Calu3 (cell line): ENCODE measurements at regions of chr7 and their contacts with region 1.

Region 1: DNA sequence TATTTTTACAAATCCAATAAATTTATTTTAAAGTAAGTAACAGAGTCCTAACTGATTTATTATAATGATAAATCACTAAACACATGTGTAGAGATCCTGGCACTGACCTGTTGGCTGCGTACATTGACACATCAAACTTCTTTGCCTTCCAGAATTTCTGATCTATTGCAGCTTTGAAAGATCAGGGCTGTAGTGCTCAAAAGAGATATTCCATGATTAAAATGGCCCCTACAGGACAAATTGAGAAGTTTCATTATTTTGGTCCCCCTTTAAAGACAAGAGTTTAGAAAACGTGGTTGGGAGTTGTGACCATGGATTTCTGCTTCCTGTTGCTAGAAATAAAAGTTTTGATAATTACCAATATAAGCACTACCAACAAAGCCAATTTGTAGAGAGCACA is 87.7 kb upstream of the PDK4 start:
- DNase-seq: no peak
- H3K4me3 Mint-ChIP-seq: no peak overlapping the region
- H3K27ac Mint-ChIP-seq: no peak overlapping the region
- H3K4me1 Mint-ChIP-seq: peaks cover 6% of the 10 kb centered on the region
- H3K27me3 Mint-ChIP-seq: no peaks in the 10 kb centered on the region
- CTCF ChIP-seq: no peak

Region 2: DNA sequence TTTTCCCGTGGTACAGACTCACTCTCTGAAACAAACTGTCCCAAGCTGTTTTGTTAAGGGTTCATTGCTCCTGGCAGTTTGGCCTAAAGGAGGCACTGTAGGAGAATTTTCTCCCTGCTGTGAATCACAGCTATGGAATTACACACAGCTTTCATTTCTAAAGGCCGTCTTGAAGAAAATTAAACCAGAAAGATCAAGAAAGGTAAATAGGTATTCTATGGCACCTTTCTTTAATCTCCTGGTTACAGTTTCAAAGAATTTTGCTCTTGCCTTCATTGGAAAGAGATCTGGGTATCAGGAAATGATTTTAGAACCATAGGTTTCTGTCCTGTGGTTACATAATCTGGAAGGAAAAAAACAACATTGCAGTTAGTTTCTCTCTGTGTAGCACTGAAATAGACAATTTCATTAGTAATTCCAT is 138.9 kb before region 1 on chr7:
- CTCF ChIA-PET with region 1: interaction called, 29 read pairs
- intact Hi-C with region 1: loop called (anchors 1 kb)
- DNase-seq: peak; percentile 43
- H3K4me3 Mint-ChIP-seq: peak overlapping the region; percentile 64
- H3K27ac Mint-ChIP-seq: peak overlapping the region; percentile 92
- H3K4me1 Mint-ChIP-seq: peaks cover 16% of the 10 kb centered on the region
- H3K27me3 Mint-ChIP-seq: no peaks in the 10 kb centered on the region
- CTCF ChIP-seq: peak; percentile 20

Region 3: DNA sequence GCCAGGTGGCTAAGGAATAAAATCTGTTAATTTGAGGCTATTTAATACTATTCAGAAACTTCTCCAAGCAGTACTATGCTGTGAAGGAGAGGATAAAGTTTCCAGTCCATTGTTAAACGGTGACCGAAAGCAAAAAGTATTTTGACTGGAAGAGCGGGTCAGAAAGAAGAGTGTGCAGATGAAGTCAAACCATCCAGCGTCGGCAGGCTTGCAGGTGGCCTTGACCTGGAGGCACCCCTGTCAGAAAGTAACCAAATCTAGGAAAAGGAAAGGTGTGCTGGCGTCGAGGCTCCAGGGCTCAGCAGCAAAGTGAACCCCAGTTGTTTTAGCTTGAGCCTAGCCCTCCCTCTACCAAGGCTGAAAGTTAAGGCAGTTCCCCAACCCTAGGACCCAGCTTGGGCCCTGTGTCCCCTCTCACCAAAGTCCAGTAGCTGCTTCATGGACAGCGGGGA is 88.3 kb before region 1 on chr7:
- CTCF ChIA-PET with region 1: no interaction called
- intact Hi-C with region 1: loop called (anchors 2 kb)
- DNase-seq: no peak
- H3K4me3 Mint-ChIP-seq: peak overlapping the region; percentile 73
- H3K27ac Mint-ChIP-seq: peak overlapping the region; percentile 74
- H3K4me1 Mint-ChIP-seq: peaks cover 17% of the 10 kb centered on the region
- H3K27me3 Mint-ChIP-seq: no peaks in the 10 kb centered on the region
- CTCF ChIP-seq: no peak

Region 4: GRCh38 chr7:95608359-95609173 is 75.5 kb before region 1 on chr7:
- CTCF ChIA-PET with region 1: interaction called, 4 read pairs
- intact Hi-C with region 1: loop called (anchors 5 kb)
- DNase-seq: peak; percentile 83
- H3K4me3 Mint-ChIP-seq: no peak overlapping the region
- H3K27ac Mint-ChIP-seq: peak overlapping the region; percentile 52
- H3K4me1 Mint-ChIP-seq: peaks cover 37% of the 10 kb centered on the region
- H3K27me3 Mint-ChIP-seq: no peaks in the 10 kb centered on the region
- CTCF ChIP-seq: no peak